ENCODE measurements at regions of chr1 and their contacts with region 1.

Region 1: GRCh38 chr1:178300352-178300699 is 196.4 kb downstream of the CLEC20A start:
- DNase-seq: no peak
- H3K4me3 ChIP-seq: no peak overlapping the region
- H3K27ac ChIP-seq: no peak overlapping the region
- H3K4me1 ChIP-seq: peaks cover 10% of the 10 kb centered on the region
- H3K27me3 ChIP-seq: no peaks in the 10 kb centered on the region
- CTCF ChIP-seq: no peak
- POLR2A ChIP-seq: no peak

Region 2: DNA sequence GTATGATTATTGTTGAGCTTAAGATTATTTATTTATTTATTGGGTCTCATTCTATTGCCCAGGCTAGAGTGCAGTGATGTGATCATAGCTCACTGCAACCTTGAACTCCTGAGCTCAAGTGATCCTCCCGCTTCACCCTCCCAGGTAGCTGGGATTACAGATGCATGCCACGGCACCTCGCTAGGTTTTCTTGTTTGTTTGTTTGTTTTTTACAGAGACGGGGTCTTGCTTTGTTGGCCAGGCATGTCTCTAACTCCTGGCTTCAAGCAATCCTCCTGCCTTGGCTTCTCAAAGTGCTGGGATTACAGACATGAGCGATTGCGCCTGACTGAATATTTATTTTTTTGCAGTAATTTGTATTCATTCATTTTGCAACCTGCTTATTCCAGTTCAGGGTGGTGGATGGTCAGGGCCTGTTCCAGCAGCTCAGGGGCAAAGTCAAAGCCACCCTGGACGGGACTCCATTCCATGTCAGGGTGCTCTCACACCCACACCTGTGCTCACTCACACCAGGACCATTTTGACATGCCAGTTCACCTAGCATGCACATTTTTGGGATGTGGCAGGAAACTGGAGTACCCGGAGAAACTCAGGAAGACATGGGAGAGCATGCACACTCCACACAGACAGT is 236.0 kb before region 1 on chr1:
- CTCF ChIA-PET with region 1: no interaction called
- POLR2A ChIA-PET with region 1: no interaction called
- dilution Hi-C with region 1: no loop called
- intact Hi-C with region 1: no loop called
- DNase-seq: no peak
- H3K4me3 ChIP-seq: no peak overlapping the region
- H3K27ac ChIP-seq: no peak overlapping the region
- H3K4me1 ChIP-seq: no peaks in the 10 kb centered on the region
- H3K27me3 ChIP-seq: no peaks in the 10 kb centered on the region
- CTCF ChIP-seq: no peak
- POLR2A ChIP-seq: no peak

Region 3: DNA sequence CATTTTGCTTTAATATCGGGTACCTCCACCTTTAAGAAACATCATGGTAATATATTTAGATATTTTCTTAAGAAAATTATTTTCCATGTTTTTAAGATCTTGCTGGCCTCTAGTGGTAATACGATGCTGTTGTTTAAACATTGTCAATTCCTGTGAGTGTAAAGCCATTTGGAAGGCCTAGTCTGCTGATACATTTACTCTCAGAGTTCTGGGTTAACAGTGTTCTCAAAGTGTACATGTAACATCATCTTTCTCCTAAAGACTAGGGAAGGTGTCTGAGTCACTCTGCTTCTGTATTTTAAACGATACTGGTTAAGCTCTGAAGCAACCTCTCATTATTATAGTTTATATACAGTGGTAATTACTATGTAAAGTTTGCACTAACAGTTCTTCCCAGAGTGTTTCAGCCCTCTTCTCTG is 17.4 kb before region 1 on chr1:
- CTCF ChIA-PET with region 1: interaction called, 12 read pairs
- POLR2A ChIA-PET with region 1: no interaction called
- dilution Hi-C with region 1: no loop called
- intact Hi-C with region 1: no loop called
- DNase-seq: peak; percentile 69
- H3K4me3 ChIP-seq: no peak overlapping the region
- H3K27ac ChIP-seq: no peak overlapping the region
- H3K4me1 ChIP-seq: no peaks in the 10 kb centered on the region
- H3K27me3 ChIP-seq: no peaks in the 10 kb centered on the region
- CTCF ChIP-seq: peak; percentile 28 to 34
- POLR2A ChIP-seq: no peak

Region 4: DNA sequence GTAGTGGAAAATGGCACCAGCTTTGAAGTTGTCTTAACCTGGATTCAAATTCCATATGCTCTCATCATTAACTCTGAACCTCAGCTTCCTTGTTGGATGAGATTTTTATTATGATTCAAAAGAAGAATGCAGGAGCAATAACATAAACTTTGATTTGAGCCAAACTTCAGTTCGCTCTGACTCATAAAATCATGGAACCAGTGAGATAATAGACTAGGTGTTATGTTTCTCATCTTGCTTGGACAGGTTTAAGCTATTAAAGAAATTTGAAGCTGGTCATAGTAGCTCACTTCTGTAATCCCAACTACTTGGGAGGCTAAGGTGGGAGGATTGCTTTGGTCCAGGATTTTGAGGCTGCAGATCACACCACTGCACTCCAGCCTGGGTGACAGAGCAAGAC is 23.7 kb after region 1 on chr1:
- CTCF ChIA-PET with region 1: interaction called, 10 read pairs
- POLR2A ChIA-PET with region 1: no interaction called
- dilution Hi-C with region 1: no loop called
- intact Hi-C with region 1: no loop called
- DNase-seq: no peak
- H3K4me3 ChIP-seq: no peak overlapping the region
- H3K27ac ChIP-seq: no peak overlapping the region
- H3K4me1 ChIP-seq: no peaks in the 10 kb centered on the region
- H3K27me3 ChIP-seq: no peaks in the 10 kb centered on the region
- CTCF ChIP-seq: no peak
- POLR2A ChIP-seq: no peak

Region 5: DNA sequence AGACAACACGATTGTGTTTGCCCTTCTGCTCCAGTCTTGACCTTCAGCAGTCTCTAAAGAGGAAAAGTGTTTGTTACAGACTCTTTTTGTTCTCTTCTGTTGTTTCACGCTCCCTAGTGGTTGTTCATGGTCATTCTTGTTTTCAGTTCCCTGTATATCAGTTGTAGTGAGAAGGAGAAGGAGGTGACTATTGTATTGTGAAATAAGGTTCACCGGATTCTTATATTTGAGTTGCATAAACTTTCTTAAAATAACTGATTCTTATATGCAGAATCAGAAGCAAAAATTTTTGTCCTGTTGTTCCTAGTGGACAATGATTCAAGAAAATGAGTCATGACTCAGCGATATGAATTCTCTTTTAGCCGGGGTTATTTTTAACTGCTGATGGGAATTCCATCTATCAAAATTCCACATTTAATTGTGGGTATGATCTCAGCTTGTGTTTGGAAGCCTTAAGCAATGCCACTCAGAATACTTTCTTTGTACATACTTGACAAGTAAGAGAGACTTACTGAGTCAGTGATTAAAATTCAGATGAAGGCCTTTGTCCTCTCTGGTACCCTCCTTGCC is 44.3 kb after region 1 on chr1:
- CTCF ChIA-PET with region 1: interaction called, 18 read pairs
- POLR2A ChIA-PET with region 1: no interaction called
- dilution Hi-C with region 1: no loop called
- intact Hi-C with region 1: no loop called
- DNase-seq: peak; percentile 87
- H3K4me3 ChIP-seq: no peak overlapping the region
- H3K27ac ChIP-seq: peak overlapping the region; percentile 72
- H3K4me1 ChIP-seq: peaks cover 27% of the 10 kb centered on the region
- H3K27me3 ChIP-seq: no peaks in the 10 kb centered on the region
- CTCF ChIP-seq: peak; percentile 29 to 50
- POLR2A ChIP-seq: no peak

Region 6: DNA sequence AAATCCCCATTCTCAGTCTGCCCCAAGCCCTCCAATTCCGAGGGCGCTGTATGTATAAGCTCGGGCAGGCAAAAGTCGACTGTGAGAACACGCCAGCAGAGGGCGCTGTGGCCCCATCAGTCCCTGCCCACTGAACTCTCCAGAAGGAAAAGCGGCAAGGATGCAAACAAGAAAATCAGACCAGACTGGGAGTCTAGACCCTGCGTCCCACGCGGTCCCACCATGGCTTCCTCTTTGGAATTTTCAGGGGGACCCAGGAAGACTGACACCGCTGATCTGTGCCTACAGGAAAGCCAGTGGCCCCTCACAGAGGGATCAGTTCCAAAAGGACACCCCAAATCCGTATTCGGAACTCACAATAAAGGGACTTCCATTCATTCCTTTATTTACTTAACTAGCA is 232.1 kb after region 1 on chr1:
- CTCF ChIA-PET with region 1: interaction called, 29 read pairs
- POLR2A ChIA-PET with region 1: no interaction called
- dilution Hi-C with region 1: no loop called
- intact Hi-C with region 1: loop called (anchors 1 kb)
- DNase-seq: peak; percentile 82
- H3K4me3 ChIP-seq: no peak overlapping the region
- H3K27ac ChIP-seq: no peak overlapping the region
- H3K4me1 ChIP-seq: no peaks in the 10 kb centered on the region
- H3K27me3 ChIP-seq: no peaks in the 10 kb centered on the region
- CTCF ChIP-seq: peak; percentile 87 to 89
- POLR2A ChIP-seq: no peak